ENCODE measurements at regions of chr2 and their contacts with region 1.

Region 1: DNA sequence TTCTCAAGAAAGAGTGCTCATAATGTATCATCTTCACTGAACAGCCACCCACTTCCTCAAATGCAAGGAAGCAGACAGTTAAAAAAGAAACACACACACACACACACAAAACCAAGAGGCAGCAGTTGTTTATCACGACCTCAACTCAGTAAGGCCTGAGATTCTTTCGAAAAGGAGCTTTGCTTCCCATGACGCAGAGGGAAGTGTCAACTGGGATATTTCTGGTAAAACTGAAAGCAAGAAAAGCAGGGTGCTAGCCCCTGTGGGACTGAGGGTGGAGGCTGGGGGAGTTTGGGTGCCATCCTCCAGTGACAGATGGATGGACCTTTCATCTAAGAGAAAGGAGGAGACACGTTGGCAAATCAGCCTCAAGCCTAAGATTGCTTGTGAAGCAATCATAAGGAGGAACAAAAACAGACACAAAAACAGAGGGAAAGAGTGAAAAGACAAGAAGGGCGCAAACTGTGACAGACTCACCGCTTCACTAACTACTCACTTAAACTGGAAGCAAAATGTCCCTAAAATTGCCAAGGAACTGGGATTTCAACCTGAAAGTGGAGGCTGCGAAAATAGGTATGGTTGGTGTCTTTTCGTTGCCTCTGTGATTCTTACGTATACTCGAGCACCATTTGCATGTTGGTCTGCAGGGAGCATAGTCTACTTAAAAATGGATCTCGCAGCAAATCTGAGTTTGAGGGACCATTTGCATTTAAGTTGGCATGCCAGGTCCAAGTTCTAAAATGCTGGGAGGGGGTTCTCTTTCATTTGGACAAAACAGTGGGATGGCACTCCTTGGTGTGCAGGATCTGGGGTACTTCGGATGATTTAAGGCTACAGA is at the start of gene ARHGAP25:
- DNase-seq: peak; percentile 81
- ATAC-seq: peak; percentile 72
- H3K4me3 Mint-ChIP-seq: no peak within 1 kb of the TSS
- H3K27ac Mint-ChIP-seq: no peak within 1 kb of the TSS
- H3K4me1 Mint-ChIP-seq: peaks cover 30% of the 10 kb centered on the region
- H3K27me3 Mint-ChIP-seq: no peaks in the 10 kb centered on the region
- CTCF ChIP-seq: no peak
- total RNA-seq, gene ARHGAP25: 59.3 to 61.5 TPM

Region 2: DNA sequence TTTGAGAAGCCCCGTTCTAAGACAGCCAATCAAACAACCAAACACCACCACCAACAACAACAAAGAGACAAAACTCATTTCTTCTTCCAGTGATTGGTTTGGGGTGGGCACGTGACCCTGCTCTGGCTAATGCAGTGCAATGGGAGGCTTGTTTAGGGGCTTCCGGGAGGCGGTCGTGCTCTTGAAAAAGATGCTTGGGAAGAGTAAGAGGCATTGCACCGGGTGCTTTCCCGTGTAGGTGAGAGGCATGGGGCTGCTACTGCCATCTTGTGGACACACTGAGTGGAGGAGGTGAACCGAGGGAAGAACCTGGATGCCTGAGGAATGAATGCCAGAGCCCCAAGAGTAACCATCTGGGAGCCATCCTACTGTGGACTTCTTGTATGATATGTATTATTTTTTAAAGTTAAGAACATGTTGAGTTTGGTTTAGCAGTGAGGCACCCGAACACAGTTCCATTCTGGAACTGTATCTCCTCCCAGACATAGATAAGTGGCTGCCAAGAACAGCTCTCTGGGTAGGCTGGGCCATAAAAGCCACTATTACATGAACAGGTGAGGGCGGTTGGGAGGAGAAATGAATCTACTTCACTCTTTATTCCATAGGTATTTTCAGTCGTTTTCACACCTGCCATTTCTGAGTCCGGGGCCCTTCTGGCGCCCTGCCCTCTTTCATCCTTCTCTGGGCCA is 19.4 kb before region 1 on chr2:
- CTCF ChIA-PET with region 1: interaction called, 43 read pairs
- POLR2A ChIA-PET with region 1: interaction called, 111 read pairs
- intact Hi-C with region 1: loop called (anchors 2 kb)
- DNase-seq: peak; percentile 66
- ATAC-seq: no peak
- H3K4me3 Mint-ChIP-seq: no peak overlapping the region
- H3K27ac Mint-ChIP-seq: peak overlapping the region; percentile 76
- H3K4me1 Mint-ChIP-seq: peaks cover 69% of the 10 kb centered on the region
- H3K27me3 Mint-ChIP-seq: peaks cover 2% of the 10 kb centered on the region
- CTCF ChIP-seq: peak; percentile 71

Region 3: GRCh38 chr2:68721482-68722101 is 13.3 kb before region 1 on chr2:
- CTCF ChIA-PET with region 1: interaction called, 43 read pairs
- POLR2A ChIA-PET with region 1: interaction called, 111 read pairs
- intact Hi-C with region 1: loop called (anchors 2 kb)
- DNase-seq: peak; percentile 53
- ATAC-seq: peak; percentile 33
- H3K4me3 Mint-ChIP-seq: peak overlapping the region; percentile 50
- H3K27ac Mint-ChIP-seq: peak overlapping the region; percentile 87
- H3K4me1 Mint-ChIP-seq: peaks cover 77% of the 10 kb centered on the region
- H3K27me3 Mint-ChIP-seq: no peaks in the 10 kb centered on the region
- CTCF ChIP-seq: no peak

Region 4: GRCh38 chr2:68774569-68775271 is 39.8 kb after region 1 on chr2:
- CTCF ChIA-PET with region 1: no interaction called
- POLR2A ChIA-PET with region 1: interaction called, 26 read pairs
- intact Hi-C with region 1: loop called (anchors 5 kb)
- DNase-seq: peak; percentile 89
- ATAC-seq: peak; percentile 73
- H3K4me3 Mint-ChIP-seq: peak overlapping the region; percentile 75
- H3K27ac Mint-ChIP-seq: peak overlapping the region; percentile 99
- H3K4me1 Mint-ChIP-seq: peaks cover 87% of the 10 kb centered on the region
- H3K27me3 Mint-ChIP-seq: no peaks in the 10 kb centered on the region
- CTCF ChIP-seq: no peak

Measured in activated CD8-positive, alpha-beta T cell treated with anti-CD3 and anti-CD28 coated beads for 36 hours (primary cell).